PC-9 (cell line): ENCODE measurements at regions of chr6 and their contacts with region 1.

Region 1: DNA sequence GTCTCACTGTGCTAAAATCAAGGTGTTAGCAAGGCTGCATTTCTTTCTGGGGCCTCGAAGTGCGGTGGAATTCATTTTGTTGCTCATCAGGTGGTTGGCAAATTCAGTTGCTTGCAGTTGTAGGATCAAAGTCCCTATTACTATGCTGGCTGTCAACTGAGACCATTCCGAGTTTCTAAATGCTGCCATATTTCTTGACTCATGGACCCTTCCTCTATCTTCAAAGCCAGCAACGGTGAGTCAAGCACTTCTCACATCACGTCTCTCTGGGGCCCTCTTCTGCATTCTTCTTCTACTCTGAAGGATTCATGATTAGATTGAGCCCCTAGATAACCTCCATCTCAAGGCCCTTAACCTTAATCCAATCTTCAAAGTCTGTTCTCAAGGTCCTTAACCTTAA is 619.7 kb downstream of the HACE1 start:
- DNase-seq: no peak
- H3K4me3 ChIP-seq: no peak overlapping the region
- H3K27ac ChIP-seq: no peak overlapping the region
- H3K4me1 ChIP-seq: no peaks in the 10 kb centered on the region
- H3K27me3 ChIP-seq: no peaks in the 10 kb centered on the region
- CTCF ChIP-seq: no peak

Region 2: DNA sequence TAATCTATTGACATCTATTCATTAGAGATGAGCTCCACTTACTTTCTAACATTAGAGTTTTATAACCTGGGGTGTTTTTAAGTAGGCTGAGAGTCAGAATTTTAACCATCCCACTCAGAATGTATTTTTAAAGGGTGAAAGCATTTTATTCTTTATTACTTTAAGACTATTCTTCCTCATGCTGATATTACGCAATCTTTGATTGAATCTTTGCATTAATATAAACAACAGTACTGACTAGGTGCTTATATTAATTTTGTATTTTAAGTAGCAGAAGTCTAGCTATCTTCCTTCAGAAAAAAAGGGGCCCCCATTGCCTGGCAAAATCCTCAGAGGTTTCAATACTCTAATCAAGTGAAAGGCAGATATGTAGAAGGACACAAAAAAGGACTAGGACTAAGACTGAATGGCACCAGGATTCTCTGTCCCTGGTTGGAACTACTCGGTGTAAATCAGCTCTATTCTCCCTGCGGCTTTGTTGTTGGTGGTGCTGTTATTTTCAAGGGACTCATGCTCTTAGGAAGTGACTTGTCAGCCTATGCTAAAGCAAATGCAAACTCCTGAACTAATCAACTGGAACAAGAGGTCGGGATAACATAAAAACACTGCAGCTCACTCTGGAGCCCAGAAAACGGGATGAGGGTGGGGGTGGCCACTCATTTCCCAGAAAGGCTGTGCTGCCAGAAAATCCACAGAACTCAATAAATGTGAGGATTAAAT is 1522.1 kb before region 1 on chr6:
- CTCF ChIA-PET with region 1: interaction called, 10 read pairs
- POLR2A ChIA-PET with region 1: no interaction called
- intact Hi-C with region 1: no loop called
- DNase-seq: no peak
- H3K4me3 ChIP-seq: no peak overlapping the region
- H3K27ac ChIP-seq: no peak overlapping the region
- H3K4me1 ChIP-seq: no peaks in the 10 kb centered on the region; the same call in 1 of the 2 replicates
- H3K27me3 ChIP-seq: no peaks in the 10 kb centered on the region
- CTCF ChIP-seq: no peak

Region 3: DNA sequence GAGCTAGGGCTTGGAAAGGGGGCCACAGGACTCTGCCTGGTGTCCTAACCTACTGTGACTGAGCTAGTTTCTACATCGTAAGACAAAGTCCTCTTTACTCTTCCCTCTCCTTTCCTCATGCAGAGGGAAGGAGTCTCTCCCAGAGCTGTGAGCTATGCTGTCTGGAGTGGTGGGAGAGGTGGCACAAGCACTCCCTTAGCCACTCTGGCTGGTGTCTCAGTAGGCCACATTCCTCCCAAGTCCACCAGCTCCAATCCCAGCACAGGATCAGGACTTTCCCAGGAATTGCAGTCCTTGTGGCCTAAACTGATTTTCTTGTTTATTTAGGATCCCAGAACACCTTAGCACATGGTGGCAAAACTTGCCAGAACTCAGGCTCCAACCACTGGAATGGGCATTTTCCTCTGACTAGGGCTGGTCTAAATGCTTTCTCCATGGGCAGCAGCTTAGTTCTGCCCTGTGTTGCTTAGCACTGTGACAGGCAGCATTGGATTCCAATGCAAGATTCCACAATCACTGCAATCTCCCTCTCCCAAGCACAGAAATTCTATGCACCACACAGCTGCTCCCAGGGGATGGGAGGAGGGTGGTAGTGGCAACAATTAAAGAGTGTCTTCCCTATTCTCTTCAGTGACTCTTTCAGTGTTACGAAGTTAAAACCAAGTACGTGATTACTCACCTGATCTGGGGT is 113.5 kb before region 1 on chr6:
- CTCF ChIA-PET with region 1: no interaction called
- POLR2A ChIA-PET with region 1: no interaction called
- intact Hi-C with region 1: no loop called
- DNase-seq: no peak
- H3K4me3 ChIP-seq: no peak overlapping the region
- H3K27ac ChIP-seq: no peak overlapping the region
- H3K4me1 ChIP-seq: no peaks in the 10 kb centered on the region
- H3K27me3 ChIP-seq: no peaks in the 10 kb centered on the region
- CTCF ChIP-seq: no peak